ENCODE measurements at regions of chr1 and their contacts with region 1.

Region 1: DNA sequence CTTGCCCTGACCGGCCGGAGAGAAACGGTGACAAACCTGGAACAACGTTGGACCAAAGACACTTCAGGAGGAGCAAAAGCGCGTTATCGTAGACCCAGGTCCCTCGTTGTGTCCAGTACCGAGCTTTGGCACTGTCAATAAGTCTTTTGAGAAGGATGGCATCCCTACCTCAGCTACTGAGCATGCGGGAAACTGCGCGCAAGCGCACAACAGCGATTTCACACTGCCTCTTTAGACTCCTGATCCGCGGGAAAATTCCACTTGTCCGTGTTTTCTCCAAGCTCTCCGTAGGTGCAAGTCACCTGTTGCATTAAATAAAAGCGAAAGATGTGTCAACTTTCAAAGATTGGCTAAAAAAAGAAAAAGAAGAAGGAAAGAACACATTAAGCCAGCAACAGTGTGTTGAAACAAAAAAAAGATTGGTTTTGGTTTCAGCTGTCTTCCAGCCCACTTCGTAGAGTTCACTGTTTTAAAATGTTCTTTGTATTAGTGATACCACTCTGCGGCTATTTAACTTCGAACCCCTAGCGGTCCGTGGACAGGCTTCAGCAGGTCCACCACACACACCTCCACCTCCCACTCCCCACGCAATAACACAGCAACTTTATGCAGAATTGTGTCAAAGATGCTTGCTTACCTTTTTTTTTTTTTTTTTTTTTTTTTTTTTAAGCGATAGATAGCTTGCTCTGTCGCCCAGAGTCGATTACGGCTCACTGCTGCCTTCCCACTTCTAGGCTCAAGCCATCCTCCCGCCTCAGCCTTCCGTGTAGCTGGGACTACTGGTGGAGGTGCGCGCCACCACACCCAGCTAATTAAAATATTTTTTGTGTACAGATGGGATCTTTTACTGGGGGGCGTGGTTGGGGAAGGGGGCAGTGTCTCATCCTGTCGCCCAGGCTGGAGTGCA is at the start of gene BPNT1:
- DNase-seq: peak; percentile 90 to 98 (median 91)
- ATAC-seq: peak; percentile 79
- H3K4me3 ChIP-seq: peak within 1 kb of the TSS; percentile 50
- H3K27ac ChIP-seq: peak within 1 kb of the TSS; percentile 13; the same call in 2 of the 3 replicates
- H3K4me1 ChIP-seq: peaks cover 9 to 18% of the 10 kb centered on the region in 2 experiments; a peak in 4 of 5 replicates
- H3K27me3 ChIP-seq: no peaks in the 10 kb centered on the region
- CTCF ChIP-seq: peak in 1 of 3 experiments; percentile 30; a peak in 1 of 6 replicates
- EP300 ChIP-seq: peak; percentile 64
- POLR2A ChIP-seq: peak; percentile 75
- RAD21 ChIP-seq: no peak
- polyA plus RNA-seq, gene BPNT1: 30.2 to 52.9 TPM

Region 2: DNA sequence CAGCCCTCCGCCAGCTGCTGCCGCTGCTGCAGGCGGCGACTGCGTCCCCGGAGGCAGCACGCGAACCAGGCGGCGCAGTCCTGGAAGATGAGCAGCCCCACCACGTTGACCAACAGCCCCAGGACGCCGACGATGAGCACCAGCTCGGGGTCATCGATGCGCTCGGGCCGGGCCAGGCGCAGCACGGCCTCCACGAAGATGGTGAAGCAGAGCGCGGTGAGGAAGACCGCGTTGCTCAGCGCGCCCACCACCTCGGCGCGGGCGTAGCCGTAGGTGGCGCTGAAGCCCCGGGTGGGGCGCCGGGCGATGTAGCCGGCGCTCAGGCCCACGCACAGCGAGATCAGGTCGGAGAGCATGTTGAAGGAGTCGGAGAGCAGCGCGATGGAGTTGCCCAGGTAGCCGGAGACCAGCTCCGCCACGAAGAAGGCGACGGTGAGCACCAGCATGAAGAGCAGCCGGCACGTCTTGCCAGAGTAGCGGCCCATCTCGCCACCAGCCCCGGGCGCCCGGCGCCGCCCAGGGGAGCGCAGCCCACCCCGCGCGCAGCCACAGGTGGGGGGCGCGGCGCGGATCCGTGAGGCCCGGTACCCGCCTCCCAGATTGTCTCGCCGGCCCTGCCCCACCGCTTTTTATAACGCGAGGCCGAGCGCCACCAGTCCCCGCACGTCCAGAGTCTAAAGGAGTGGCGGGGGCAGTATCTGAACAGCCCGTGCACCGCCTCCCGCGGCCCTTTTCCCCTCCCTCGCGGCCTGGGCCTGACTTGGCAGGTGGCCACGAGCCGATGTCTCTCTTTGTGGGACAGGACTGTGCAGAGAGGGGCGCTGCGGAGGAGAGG is 161.7 kb before region 1 on chr1 and contains the start of gene SLC30A10:
- CTCF ChIA-PET with region 1: no interaction called
- POLR2A ChIA-PET with region 1: no interaction called
- in situ Hi-C with region 1: no loop called
- intact Hi-C with region 1: loop called (anchors 5 kb)
- DNase-seq: peak; percentile 82 to 90 (median 87)
- ATAC-seq: peak; percentile 88
- H3K4me3 ChIP-seq: peak within 1 kb of the TSS; percentile 66
- H3K27ac ChIP-seq: peak within 1 kb of the TSS; percentile 57
- H3K4me1 ChIP-seq: peaks cover 25 to 26% of the 10 kb centered on the region in 2 experiments; a peak in 4 of 5 replicates
- H3K27me3 ChIP-seq: no peaks in the 10 kb centered on the region
- CTCF ChIP-seq: peak; percentile 36 to 37 (median 36); a peak in 4 of 6 replicates
- EP300 ChIP-seq: no peak
- POLR2A ChIP-seq: peak; percentile 54; the same call in 1 of the 2 replicates
- RAD21 ChIP-seq: peak in 1 of 2 experiments; percentile 38; a peak in 2 of 4 replicates
- polyA plus RNA-seq, gene SLC30A10: 2.6 to 3.8 TPM

Region 3: DNA sequence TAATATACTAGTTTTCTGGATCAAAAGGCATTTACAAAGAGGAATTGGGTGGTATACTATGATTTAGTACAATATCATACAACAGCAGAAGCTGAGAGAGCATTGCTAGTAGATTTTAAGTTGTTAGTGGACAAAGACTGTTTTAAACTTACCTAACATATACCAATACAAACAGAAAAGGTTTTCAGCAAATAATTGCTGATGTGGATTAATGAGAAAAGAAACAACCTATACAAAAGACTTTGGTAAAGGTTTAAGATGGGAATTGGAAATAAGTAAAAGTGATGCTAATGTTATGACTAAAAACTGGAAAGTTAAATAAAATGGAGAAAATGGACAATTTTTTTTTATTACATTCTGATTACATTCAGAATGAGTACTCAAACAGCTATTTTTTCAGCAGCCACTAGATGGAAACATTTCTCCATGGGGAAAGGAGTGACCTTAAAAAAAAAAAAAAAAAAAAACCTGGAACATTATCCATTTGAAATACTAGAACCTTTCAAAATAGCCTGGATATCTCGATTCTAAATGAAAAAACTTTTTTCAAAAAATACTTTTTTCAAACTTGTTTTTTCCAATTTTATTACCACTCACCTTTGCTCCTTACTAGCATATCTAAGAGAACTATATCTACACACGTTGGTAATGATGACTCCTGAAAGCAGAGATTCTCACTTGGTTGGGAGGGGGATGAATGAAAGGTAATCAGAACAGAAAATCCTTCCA is 99.0 kb before region 1 on chr1:
- CTCF ChIA-PET with region 1: no interaction called
- POLR2A ChIA-PET with region 1: no interaction called
- in situ Hi-C with region 1: no loop called
- intact Hi-C with region 1: loop called (anchors 5 kb)
- DNase-seq: peak in 3 of 4 experiments; percentile 26 to 56 (median 28)
- ATAC-seq: peak; percentile 52
- H3K4me3 ChIP-seq: no peak overlapping the region
- H3K27ac ChIP-seq: no peak overlapping the region
- H3K4me1 ChIP-seq: no peaks in the 10 kb centered on the region; a peak in 1 of 5 replicates
- H3K27me3 ChIP-seq: no peaks in the 10 kb centered on the region
- CTCF ChIP-seq: peak in 2 of 3 experiments; percentile 28 to 76; a peak in 3 of 6 replicates
- EP300 ChIP-seq: no peak
- POLR2A ChIP-seq: no peak
- RAD21 ChIP-seq: peak; percentile 39 to 48; a peak in 3 of 4 replicates

Region 4: DNA sequence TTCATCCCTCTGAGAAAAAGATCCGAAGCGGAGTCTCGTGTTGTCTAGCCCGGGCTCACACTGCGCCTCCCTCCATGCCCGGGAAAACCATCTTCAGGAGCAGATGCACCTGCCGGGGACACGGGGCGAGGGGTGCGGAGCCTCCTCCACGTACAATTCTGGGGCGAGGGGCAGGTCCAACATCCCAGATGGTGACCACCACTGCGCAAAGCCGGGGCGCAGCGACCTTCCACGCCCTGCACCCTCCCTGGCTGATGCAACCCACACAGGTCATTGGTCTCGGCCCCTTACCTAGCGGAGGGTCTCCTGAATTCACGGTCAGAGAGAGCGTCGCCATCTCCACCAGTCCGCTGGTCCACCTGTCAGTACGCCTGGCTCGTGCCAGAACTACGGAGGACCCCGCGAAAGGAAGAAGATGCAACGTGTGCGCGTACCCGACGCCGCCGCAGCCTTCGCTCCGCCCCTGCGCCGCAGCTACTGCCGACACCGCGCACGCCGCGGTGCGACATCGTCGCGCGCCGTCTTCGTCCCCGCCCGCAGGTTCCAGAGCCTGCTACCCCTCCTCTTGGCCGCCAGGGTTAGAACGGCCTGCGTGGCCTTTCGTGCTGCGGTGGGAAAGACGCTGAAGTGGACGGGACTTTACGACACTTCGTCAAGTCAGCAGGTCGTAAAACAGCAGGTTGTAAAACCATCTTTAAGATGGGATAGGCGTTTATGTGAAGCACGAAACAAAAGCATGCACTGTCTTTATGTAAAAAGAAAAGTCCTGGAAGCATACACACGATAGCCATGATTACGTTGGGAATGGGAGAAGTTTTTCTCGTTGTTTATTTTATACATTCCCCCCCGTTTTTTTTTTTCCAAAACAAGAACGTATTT is 43.6 kb before region 1 on chr1 and contains the start of gene EPRS1:
- CTCF ChIA-PET with region 1: interaction called, 4 read pairs
- POLR2A ChIA-PET with region 1: interaction called, 3 read pairs
- in situ Hi-C with region 1: no loop called
- intact Hi-C with region 1: loop called (anchors 1 kb)
- DNase-seq: peak; percentile 95 to 100 (median 97)
- ATAC-seq: peak; percentile 96
- H3K4me3 ChIP-seq: peak within 1 kb of the TSS; percentile 88
- H3K27ac ChIP-seq: peak within 1 kb of the TSS; percentile 91
- H3K4me1 ChIP-seq: peaks cover 15 to 19% of the 10 kb centered on the region in 2 experiments; a peak in 4 of 5 replicates
- H3K27me3 ChIP-seq: no peaks in the 10 kb centered on the region
- CTCF ChIP-seq: peak; percentile 91 to 94 (median 91)
- EP300 ChIP-seq: peak; percentile 69
- POLR2A ChIP-seq: peak; percentile 89
- RAD21 ChIP-seq: peak in 1 of 2 experiments; percentile 34; a peak in 2 of 4 replicates
- polyA plus RNA-seq, gene EPRS1: 193 to 291 TPM

Region 5: GRCh38 chr1:220076861-220077762 is 12.8 kb before region 1 on chr1:
- CTCF ChIA-PET with region 1: no interaction called
- POLR2A ChIA-PET with region 1: interaction called, 10 read pairs
- in situ Hi-C with region 1: no loop called
- intact Hi-C with region 1: no loop called
- DNase-seq: peak in 1 of 4 experiments; percentile 26
- ATAC-seq: no peak
- H3K4me3 ChIP-seq: no peak overlapping the region
- H3K27ac ChIP-seq: no peak overlapping the region
- H3K4me1 ChIP-seq: no peaks in the 10 kb centered on the region
- H3K27me3 ChIP-seq: no peaks in the 10 kb centered on the region
- CTCF ChIP-seq: no peak
- EP300 ChIP-seq: no peak
- POLR2A ChIP-seq: no peak
- RAD21 ChIP-seq: no peak

Region 6: DNA sequence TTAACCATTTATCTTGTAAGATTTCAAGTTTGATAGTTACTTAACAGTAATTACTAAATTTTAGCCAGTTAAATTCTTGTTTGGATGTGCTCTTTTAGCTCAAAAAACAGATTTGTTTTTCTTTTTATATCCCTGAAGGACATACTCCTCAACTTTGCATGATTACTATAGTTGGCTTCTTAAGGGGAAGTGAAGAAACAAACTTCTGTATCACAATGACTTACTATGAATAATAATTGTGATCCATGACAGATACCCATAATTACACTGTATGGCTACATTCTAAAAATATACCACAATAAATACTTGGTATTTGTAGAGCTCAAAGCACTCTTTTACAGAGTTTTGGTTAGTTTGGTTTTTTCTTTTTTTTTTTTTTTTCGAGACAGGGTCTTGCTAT is 59.8 kb after region 1 on chr1:
- CTCF ChIA-PET with region 1: no interaction called
- POLR2A ChIA-PET with region 1: no interaction called
- in situ Hi-C with region 1: no loop called
- intact Hi-C with region 1: no loop called
- DNase-seq: no peak
- ATAC-seq: no peak
- H3K4me3 ChIP-seq: no peak overlapping the region
- H3K27ac ChIP-seq: no peak overlapping the region
- H3K4me1 ChIP-seq: no peaks in the 10 kb centered on the region
- H3K27me3 ChIP-seq: no peaks in the 10 kb centered on the region
- CTCF ChIP-seq: no peak
- EP300 ChIP-seq: no peak
- POLR2A ChIP-seq: no peak
- RAD21 ChIP-seq: no peak

Region 7: GRCh38 chr1:220249522-220249921 is 159.6 kb after region 1 on chr1:
- CTCF ChIA-PET with region 1: no interaction called
- POLR2A ChIA-PET with region 1: no interaction called
- in situ Hi-C with region 1: no loop called
- intact Hi-C with region 1: no loop called
- DNase-seq: peak in 1 of 4 experiments; percentile 24
- ATAC-seq: peak; percentile 40; the same call in 1 of the 3 replicates
- H3K4me3 ChIP-seq: no peak overlapping the region
- H3K27ac ChIP-seq: no peak overlapping the region
- H3K4me1 ChIP-seq: no peaks in the 10 kb centered on the region
- H3K27me3 ChIP-seq: no peaks in the 10 kb centered on the region
- CTCF ChIP-seq: no peak
- EP300 ChIP-seq: no peak
- POLR2A ChIP-seq: no peak
- RAD21 ChIP-seq: no peak